B cell (primary cell): ENCODE measurements at regions of chr13 and their contacts with region 1.

Region 1: DNA sequence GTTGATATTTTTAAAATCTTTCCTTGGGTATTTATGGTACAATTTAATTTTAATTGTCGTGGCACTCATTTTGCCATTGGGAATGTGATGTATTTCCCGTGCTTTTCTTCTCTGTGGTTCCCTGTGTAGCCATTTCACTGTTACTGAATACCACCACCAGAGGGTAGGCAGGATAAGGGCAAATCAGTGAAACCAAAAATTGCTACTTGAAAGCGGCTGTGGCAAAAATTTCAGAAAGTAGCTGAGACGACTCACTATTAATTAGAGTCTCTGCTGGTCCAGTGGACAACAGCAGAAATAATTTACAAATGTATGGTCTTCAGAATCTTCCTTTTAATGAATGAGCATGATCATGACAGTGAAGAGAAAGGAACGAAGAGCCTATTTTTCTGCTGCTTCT is 34.4 kb upstream of the MIR17HG start:
- DNase-seq: peak; percentile 51
- ATAC-seq: no peak
- H3K4me3 ChIP-seq: no peak overlapping the region
- H3K4me3 Mint-ChIP-seq: no peak overlapping the region
- H3K27ac ChIP-seq: no peak overlapping the region
- H3K27ac Mint-ChIP-seq: no peak overlapping the region
- H3K4me1 ChIP-seq: peaks cover 0 to 3% of the 10 kb centered on the region in 2 donors
- H3K4me1 Mint-ChIP-seq: peaks cover 7% of the 10 kb centered on the region
- H3K27me3 ChIP-seq: peaks cover 0 to 4% (median 0%) of the 10 kb centered on the region in 4 experiments
- H3K27me3 Mint-ChIP-seq: peaks cover 8% of the 10 kb centered on the region
- CTCF ChIP-seq: peak; percentile 67

Region 2: DNA sequence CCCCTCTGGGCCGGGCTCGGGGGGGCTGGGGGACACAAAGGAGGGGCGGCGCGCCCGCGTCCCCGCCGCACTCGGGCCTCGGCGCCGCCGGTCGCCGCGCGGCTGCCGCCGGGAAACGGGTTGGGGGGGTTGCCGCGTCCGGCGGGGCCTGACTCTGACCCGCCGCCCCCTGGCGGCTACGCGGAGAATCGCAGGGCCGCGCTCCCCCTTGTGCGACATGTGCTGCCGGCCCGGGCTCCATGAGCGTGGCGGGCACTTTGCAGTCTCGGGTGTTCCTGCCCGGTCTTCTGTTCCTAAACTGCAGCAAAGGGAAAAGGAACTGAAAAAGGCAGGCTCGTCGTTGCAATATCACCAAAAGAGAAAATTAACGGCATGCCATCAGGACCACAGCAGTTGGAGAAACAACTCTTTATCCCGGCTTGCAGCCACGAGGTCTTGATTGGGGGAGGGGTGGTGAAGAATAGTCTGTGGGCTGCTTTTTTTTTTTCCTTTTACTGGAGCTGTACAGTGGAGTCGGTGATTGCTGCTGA is 35.9 kb after region 1 on chr13:
- CTCF ChIA-PET with region 1: interaction called, 6 read pairs
- POLR2A ChIA-PET with region 1: no interaction called
- intact Hi-C with region 1: loop called (anchors 1 kb)
- DNase-seq: peak; percentile 95
- ATAC-seq: peak; percentile 63
- H3K4me3 ChIP-seq: peak overlapping the region; percentile 45 to 77 (median 66)
- H3K4me3 Mint-ChIP-seq: peak overlapping the region; percentile 95
- H3K27ac ChIP-seq: peak overlapping the region in 1 of 2 donors; percentile 81
- H3K27ac Mint-ChIP-seq: peak overlapping the region; percentile 91
- H3K4me1 ChIP-seq: peaks cover 20 to 21% of the 10 kb centered on the region in 2 donors
- H3K4me1 Mint-ChIP-seq: peaks cover 37% of the 10 kb centered on the region
- H3K27me3 ChIP-seq: no peaks in the 10 kb centered on the region
- H3K27me3 Mint-ChIP-seq: no peaks in the 10 kb centered on the region
- CTCF ChIP-seq: peak; percentile 86

Region 3: GRCh38 chr13:91406619-91407018 is 93.5 kb after region 1 on chr13:
- CTCF ChIA-PET with region 1: interaction called, 14 read pairs
- POLR2A ChIA-PET with region 1: no interaction called
- intact Hi-C with region 1: loop called (anchors 1 kb)
- DNase-seq: peak; percentile 52
- ATAC-seq: no peak
- H3K4me3 ChIP-seq: no peak overlapping the region
- H3K4me3 Mint-ChIP-seq: no peak overlapping the region
- H3K27ac ChIP-seq: no peak overlapping the region
- H3K27ac Mint-ChIP-seq: no peak overlapping the region
- H3K4me1 ChIP-seq: no peaks in the 10 kb centered on the region
- H3K4me1 Mint-ChIP-seq: peaks cover 9% of the 10 kb centered on the region
- H3K27me3 ChIP-seq: peaks cover 0 to 3% (median 0%) of the 10 kb centered on the region in 4 experiments
- H3K27me3 Mint-ChIP-seq: peaks cover 3% of the 10 kb centered on the region
- CTCF ChIP-seq: peak; percentile 56

Region 4: GRCh38 chr13:91459485-91459884 is 146.4 kb after region 1 on chr13:
- CTCF ChIA-PET with region 1: interaction called, 3 read pairs
- POLR2A ChIA-PET with region 1: no interaction called
- intact Hi-C with region 1: loop called (anchors 5 kb)
- DNase-seq: peak; percentile 7
- ATAC-seq: no peak
- H3K4me3 ChIP-seq: no peak overlapping the region
- H3K4me3 Mint-ChIP-seq: no peak overlapping the region
- H3K27ac ChIP-seq: no peak overlapping the region
- H3K27ac Mint-ChIP-seq: no peak overlapping the region
- H3K4me1 ChIP-seq: no peaks in the 10 kb centered on the region
- H3K4me1 Mint-ChIP-seq: no peaks in the 10 kb centered on the region
- H3K27me3 ChIP-seq: no peaks in the 10 kb centered on the region
- H3K27me3 Mint-ChIP-seq: peaks cover 7% of the 10 kb centered on the region
- CTCF ChIP-seq: no peak